CD8-positive, alpha-beta T cell (primary cell): ENCODE measurements at regions of chr7 and their contacts with region 1.

Region 1: DNA sequence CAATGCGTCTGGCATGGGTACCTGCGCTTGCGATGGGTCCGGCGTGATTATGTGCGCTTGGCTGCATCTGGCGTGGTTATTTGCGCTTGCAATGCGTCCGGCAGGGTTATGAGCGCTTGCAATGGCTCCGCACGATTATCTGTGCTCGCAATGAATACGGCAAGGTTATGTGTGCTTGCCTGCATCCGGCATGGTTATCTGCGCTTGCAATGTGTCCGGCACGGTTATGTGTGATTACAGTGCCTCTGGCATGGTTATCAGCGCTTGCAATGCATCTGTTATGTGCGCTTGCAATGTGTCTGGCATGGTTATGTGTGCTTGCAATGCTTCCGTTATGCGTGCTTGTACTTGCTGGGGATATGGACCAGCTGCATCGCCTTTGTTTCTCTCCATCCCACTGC is 37.7 kb downstream of the RBAK start:
- DNase-seq: no peak
- ATAC-seq: no peak
- H3K4me3 ChIP-seq: no peak overlapping the region
- H3K4me3 Mint-ChIP-seq: no peak overlapping the region
- H3K27ac ChIP-seq: no peak overlapping the region
- H3K27ac Mint-ChIP-seq: no peak overlapping the region
- H3K4me1 ChIP-seq: peaks cover 3% of the 10 kb centered on the region
- H3K4me1 Mint-ChIP-seq: peaks cover 3% of the 10 kb centered on the region
- H3K27me3 ChIP-seq: peaks cover 0 to 2% of the 10 kb centered on the region in 2 experiments
- H3K27me3 Mint-ChIP-seq: no peaks in the 10 kb centered on the region
- CTCF ChIP-seq: no peak

Region 2: GRCh38 chr7:4830176-4830575 is 253.1 kb before region 1 on chr7:
- CTCF ChIA-PET with region 1: interaction called, 20 read pairs
- POLR2A ChIA-PET with region 1: no interaction called
- intact Hi-C with region 1: loop called in 1 of 2 experiments (anchors 1 kb)
- DNase-seq: peak in 8 of 9 experiments; percentile 32 to 69 (median 61)
- ATAC-seq: peak; percentile 92
- H3K4me3 ChIP-seq: no peak overlapping the region
- H3K4me3 Mint-ChIP-seq: no peak overlapping the region
- H3K27ac ChIP-seq: no peak overlapping the region
- H3K27ac Mint-ChIP-seq: no peak overlapping the region
- H3K4me1 ChIP-seq: no peaks in the 10 kb centered on the region
- H3K4me1 Mint-ChIP-seq: peaks cover 4% of the 10 kb centered on the region
- H3K27me3 ChIP-seq: no peaks in the 10 kb centered on the region
- H3K27me3 Mint-ChIP-seq: no peaks in the 10 kb centered on the region
- CTCF ChIP-seq: peak; percentile 71

Region 3: DNA sequence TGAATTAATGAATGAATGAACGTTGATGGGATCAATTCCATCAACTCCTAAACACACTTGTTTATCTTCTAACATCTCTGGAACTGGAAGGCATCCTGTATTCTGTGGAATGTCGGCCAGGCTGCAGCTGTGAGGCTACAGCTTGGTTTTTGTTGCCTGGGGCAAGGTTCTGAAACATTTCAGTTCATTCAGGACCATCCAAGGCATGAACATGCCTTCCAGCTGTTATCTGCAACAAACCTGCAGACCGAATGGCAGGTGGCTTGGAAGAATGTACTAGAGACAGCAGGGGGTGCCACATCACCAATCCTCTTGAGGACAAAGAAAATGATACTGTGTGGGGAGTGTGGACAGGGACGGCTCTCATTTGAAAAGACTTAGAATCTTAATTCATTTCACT is 233.9 kb before region 1 on chr7:
- CTCF ChIA-PET with region 1: interaction called, 9 read pairs
- POLR2A ChIA-PET with region 1: no interaction called
- intact Hi-C with region 1: loop called (anchors 1 kb)
- DNase-seq: peak in 3 of 9 experiments; percentile 19 to 55 (median 45)
- ATAC-seq: peak; percentile 64
- H3K4me3 ChIP-seq: no peak overlapping the region
- H3K4me3 Mint-ChIP-seq: no peak overlapping the region
- H3K27ac ChIP-seq: no peak overlapping the region
- H3K27ac Mint-ChIP-seq: no peak overlapping the region
- H3K4me1 ChIP-seq: no peaks in the 10 kb centered on the region
- H3K4me1 Mint-ChIP-seq: peaks cover 2% of the 10 kb centered on the region
- H3K27me3 ChIP-seq: no peaks in the 10 kb centered on the region
- H3K27me3 Mint-ChIP-seq: peaks cover 16% of the 10 kb centered on the region
- CTCF ChIP-seq: peak; percentile 13